ENCODE measurements at regions of chr5 and their contacts with region 1.

Region 1: DNA sequence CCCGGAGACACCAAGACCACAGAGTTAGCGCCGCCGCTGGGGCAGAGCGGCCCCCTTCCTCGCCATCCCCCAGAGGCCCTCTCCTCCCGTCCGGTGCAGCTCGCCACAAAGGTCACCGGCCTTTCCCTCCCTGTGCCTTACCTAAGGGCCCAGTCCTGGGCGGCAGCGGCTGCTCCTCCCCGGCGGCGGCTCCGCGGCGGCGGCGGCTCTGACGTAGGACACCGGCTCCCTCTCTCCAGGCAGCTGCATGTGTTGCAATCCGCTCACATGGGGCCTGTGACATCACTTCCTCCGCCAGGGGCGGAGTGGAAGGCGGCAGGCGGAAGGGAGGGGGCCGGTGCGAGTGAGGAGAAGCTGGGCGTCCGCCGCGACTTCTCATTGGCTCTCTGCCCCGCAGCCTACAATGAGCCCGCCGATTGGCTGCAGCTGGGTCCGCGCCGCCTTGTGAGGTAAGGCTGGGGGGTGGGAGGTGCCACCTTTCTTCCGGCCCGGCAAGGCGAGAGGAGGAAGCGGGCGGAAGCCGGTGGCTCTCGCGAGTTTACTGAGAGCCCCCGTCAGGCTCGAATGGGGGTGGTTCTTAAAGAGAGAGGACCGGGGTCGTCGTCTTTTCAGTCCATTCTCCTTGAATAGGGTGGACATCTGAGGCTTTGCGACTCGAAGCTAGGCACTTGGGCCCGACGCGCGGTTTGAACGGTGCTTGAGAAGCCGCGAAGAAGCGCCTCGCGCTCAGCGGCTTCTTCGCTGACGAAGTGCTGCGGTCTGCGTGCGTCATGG is at the start of gene ETF1:
- DNase-seq: peak; percentile 98
- ATAC-seq: peak; percentile 92
- H3K4me3 ChIP-seq: peak within 1 kb of the TSS; percentile 91 to 95 (median 94)
- H3K27ac ChIP-seq: peak within 1 kb of the TSS; percentile 98
- H3K4me1 ChIP-seq: peaks cover 72% of the 10 kb centered on the region
- H3K27me3 ChIP-seq: no peaks in the 10 kb centered on the region; a peak in 1 of 5 replicates
- CTCF ChIP-seq: peak; percentile 26
- EP300 ChIP-seq: peak in 1 of 2 experiments; percentile 35; a peak in 1 of 4 replicates
- POLR2A ChIP-seq: peak; percentile 57 to 78; a peak in 3 of 4 replicates
- RAD21 ChIP-seq: peak; percentile 49
- total RNA-seq, gene ETF1: 184 and 270 TPM in 2 replicates

Region 2: GRCh38 chr5:138331449-138332368 is 211.4 kb before region 1 on chr5 and contains the start of gene CDC25C:
- CTCF ChIA-PET with region 1: no interaction called
- POLR2A ChIA-PET with region 1: no interaction called
- in situ Hi-C with region 1: no loop called
- intact Hi-C with region 1: loop called (anchors 10 kb)
- DNase-seq: peak; percentile 98
- ATAC-seq: peak; percentile 99
- H3K4me3 ChIP-seq: peak within 1 kb of the TSS; percentile 80 to 88 (median 85)
- H3K27ac ChIP-seq: peak within 1 kb of the TSS; percentile 83
- H3K4me1 ChIP-seq: peaks cover 45% of the 10 kb centered on the region
- H3K27me3 ChIP-seq: no peaks in the 10 kb centered on the region; a peak in 1 of 5 replicates
- CTCF ChIP-seq: no peak
- EP300 ChIP-seq: no peak
- POLR2A ChIP-seq: peak; percentile 79 to 98
- RAD21 ChIP-seq: no peak
- total RNA-seq, gene CDC25C: 27.6 and 44.1 TPM in 2 replicates

Region 3: DNA sequence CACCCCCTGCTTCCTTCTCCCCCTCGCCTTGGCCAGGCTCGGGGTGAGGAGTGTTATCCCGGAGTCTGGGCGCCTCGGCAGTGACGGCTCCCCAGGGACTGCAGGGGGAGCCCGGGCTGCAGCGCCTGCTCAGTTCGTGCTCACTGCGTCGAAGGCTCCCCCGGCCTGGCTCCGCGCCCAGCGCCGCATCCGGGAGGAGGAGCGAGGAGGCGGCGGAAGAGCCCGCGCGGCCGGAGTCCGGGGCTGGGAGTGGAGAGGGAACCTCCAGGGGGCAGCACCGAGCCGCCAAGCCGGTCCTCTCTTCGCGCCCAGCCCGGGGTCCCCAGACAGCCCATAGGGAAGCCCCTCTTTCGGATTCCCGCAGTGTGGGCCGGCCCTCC is 79.1 kb before region 1 on chr5:
- CTCF ChIA-PET with region 1: no interaction called
- POLR2A ChIA-PET with region 1: interaction called, 33 read pairs
- in situ Hi-C with region 1: loop called (anchors 5 kb)
- intact Hi-C with region 1: loop called (anchors 2 kb)
- DNase-seq: peak; percentile 86
- ATAC-seq: peak; percentile 68
- H3K4me3 ChIP-seq: peak overlapping the region; percentile 69 to 91 (median 78)
- H3K27ac ChIP-seq: peak overlapping the region; percentile 95
- H3K4me1 ChIP-seq: peaks cover 50% of the 10 kb centered on the region
- H3K27me3 ChIP-seq: peaks cover 0 to 3% of the 10 kb centered on the region in 2 experiments; a peak in 1 of 5 replicates
- CTCF ChIP-seq: peak; percentile 90
- EP300 ChIP-seq: peak in 1 of 2 experiments; percentile 53; a peak in 1 of 4 replicates
- POLR2A ChIP-seq: no peak
- RAD21 ChIP-seq: peak; percentile 95

Region 4: GRCh38 chr5:138491669-138492559 is 51.2 kb before region 1 on chr5:
- CTCF ChIA-PET with region 1: no interaction called
- POLR2A ChIA-PET with region 1: interaction called, 11 read pairs
- in situ Hi-C with region 1: no loop called
- intact Hi-C with region 1: no loop called
- DNase-seq: peak; percentile 72
- ATAC-seq: peak; percentile 84
- H3K4me3 ChIP-seq: peak overlapping the region; percentile 75 to 82 (median 79)
- H3K27ac ChIP-seq: peak overlapping the region; percentile 87
- H3K4me1 ChIP-seq: peaks cover 53% of the 10 kb centered on the region
- H3K27me3 ChIP-seq: peaks cover 4 to 35% of the 10 kb centered on the region in 2 experiments; a peak in 4 of 5 replicates
- CTCF ChIP-seq: peak; percentile 2; the same call in 1 of the 2 replicates
- EP300 ChIP-seq: no peak
- POLR2A ChIP-seq: peak in 1 of 2 experiments; percentile 72; a peak in 3 of 4 replicates
- RAD21 ChIP-seq: 0 out of 2 replicates have a peak, but pooled peaks have one; percentile 4

Region 5: DNA sequence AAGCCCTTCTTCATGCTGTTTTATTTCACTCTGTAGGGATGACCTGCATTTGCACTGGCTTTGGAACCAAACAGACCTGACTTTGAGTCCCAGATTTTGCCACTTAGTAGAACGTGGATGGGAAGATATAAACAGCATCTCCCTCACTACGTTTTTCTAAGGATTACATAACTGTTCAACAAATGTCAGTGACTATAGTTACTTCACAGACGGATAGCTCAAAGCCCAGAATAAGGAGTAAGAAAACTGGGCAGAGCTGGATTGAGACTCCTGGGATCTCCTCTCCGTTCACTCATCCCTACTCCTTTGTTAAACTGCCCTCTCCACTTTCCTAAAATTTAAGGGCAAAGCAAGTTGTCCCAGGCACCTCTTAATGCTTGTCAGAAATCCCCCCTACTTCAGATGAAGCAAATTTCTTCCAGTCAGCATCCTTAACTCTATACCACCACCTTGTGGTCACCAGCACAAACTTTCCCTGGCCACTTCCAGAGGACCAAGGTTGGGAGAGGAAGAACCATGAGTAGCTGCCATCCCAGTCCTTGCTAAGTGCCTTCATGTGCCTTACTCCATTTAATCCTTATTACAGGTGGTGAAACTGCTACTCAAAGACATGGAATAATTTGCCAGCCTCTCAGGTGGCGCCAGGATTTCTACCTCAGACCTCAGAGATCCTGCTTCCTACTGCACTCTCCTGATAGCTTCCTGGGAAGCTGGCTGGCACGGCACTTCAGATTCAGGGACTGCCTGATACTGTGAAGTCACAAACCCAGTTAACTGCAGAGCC is 39.5 kb before region 1 on chr5:
- CTCF ChIA-PET with region 1: no interaction called
- POLR2A ChIA-PET with region 1: interaction called, 10 read pairs
- in situ Hi-C with region 1: no loop called
- intact Hi-C with region 1: loop called (anchors 5 kb)
- DNase-seq: peak; percentile 56
- ATAC-seq: peak; percentile 42
- H3K4me3 ChIP-seq: no peak overlapping the region
- H3K27ac ChIP-seq: no peak overlapping the region
- H3K4me1 ChIP-seq: peaks cover 60% of the 10 kb centered on the region
- H3K27me3 ChIP-seq: no peaks in the 10 kb centered on the region
- CTCF ChIP-seq: peak; percentile 91
- EP300 ChIP-seq: no peak
- POLR2A ChIP-seq: no peak
- RAD21 ChIP-seq: peak; percentile 89

Region 6: DNA sequence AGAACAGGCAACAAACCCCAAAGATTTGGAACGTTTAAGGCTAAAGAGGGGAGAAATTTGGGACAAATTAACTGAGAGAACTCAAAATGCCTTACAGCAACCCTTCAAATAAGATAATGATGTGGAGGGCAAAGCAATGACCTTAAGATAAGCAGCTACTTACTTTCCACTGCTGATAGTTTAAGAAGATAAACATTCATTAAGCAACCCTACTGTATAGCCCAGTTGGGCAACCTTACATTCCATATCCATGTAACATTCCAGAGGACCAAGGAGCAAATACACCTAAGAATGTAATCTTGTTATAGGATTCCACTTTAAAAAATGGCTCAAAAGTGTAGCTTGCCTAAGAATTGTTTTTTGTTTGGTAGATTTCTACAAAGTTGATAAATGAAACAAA is 14.9 kb before region 1 on chr5:
- CTCF ChIA-PET with region 1: no interaction called
- POLR2A ChIA-PET with region 1: interaction called, 20 read pairs
- in situ Hi-C with region 1: no loop called
- intact Hi-C with region 1: no loop called
- DNase-seq: peak; percentile 73
- ATAC-seq: peak; percentile 74
- H3K4me3 ChIP-seq: no peak overlapping the region
- H3K27ac ChIP-seq: peak overlapping the region; percentile 32
- H3K4me1 ChIP-seq: peaks cover 62% of the 10 kb centered on the region
- H3K27me3 ChIP-seq: no peaks in the 10 kb centered on the region
- CTCF ChIP-seq: no peak
- EP300 ChIP-seq: peak in 1 of 2 experiments; percentile 86; a peak in 2 of 4 replicates
- POLR2A ChIP-seq: no peak
- RAD21 ChIP-seq: no peak

Region 7: GRCh38 chr5:138575194-138576015 is 32.3 kb after region 1 on chr5 and contains the start of gene HSPA9:
- CTCF ChIA-PET with region 1: no interaction called
- POLR2A ChIA-PET with region 1: interaction called, 22 read pairs
- in situ Hi-C with region 1: no loop called
- intact Hi-C with region 1: no loop called
- DNase-seq: peak; percentile 98
- ATAC-seq: peak; percentile 91
- H3K4me3 ChIP-seq: peak within 1 kb of the TSS; percentile 85 to 97 (median 87)
- H3K27ac ChIP-seq: peak within 1 kb of the TSS; percentile 98
- H3K4me1 ChIP-seq: peaks cover 55% of the 10 kb centered on the region
- H3K27me3 ChIP-seq: no peaks in the 10 kb centered on the region; a peak in 1 of 5 replicates
- CTCF ChIP-seq: no peak; the same call in 1 of the 2 replicates
- EP300 ChIP-seq: peak; percentile 52 to 73
- POLR2A ChIP-seq: peak; percentile 80 to 92
- RAD21 ChIP-seq: peak; percentile 71
- total RNA-seq, gene HSPA9: 478 and 735 TPM in 2 replicates